ENCODE measurements at regions of chr15 and their contacts with region 1.

Region 1: DNA sequence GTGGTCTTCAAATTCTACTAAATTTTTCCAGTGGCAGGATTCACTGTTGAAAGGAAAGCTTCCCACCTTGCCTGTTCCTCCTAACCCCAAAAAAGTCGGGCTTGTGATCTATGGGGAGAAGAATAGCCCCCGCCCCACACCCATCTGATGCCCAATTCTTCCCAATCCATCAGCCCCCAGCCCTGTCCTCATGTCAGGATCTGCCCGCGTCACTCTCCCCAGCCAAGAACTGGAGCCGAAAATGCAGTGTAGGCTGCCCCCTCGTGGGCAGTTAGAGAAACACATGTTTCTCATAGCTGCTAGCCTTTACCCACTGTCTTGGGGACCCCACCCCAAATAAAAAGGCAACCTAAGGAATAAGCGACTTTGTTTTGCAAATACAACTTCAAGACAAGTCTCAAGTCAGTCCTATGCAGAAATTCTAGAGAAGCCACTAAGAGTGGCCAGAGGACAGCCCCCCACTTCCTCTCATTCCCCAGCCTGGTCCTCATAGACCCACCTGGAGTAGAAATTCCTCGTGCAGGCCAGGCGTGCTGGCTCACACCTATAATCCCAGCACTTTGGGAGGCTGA is 13.0 kb upstream of the CSK start:
- DNase-seq: peak; percentile 84
- H3K4me3 ChIP-seq: no peak overlapping the region; a peak in 1 of 4 replicates
- H3K27ac ChIP-seq: no peak overlapping the region
- H3K4me1 ChIP-seq: peaks cover 0 to 5% of the 10 kb centered on the region in 2 experiments; a peak in 1 of 4 replicates
- H3K27me3 ChIP-seq: peaks cover 8% of the 10 kb centered on the region; the same call in 1 of the 2 replicates
- CTCF ChIP-seq: peak; percentile 87
- EP300 ChIP-seq: no peak
- RAD21 ChIP-seq: peak; percentile 88

Region 2: GRCh38 chr15:74365611-74366440 is 403.0 kb before region 1 on chr15:
- CTCF ChIA-PET with region 1: interaction called, 11 read pairs
- POLR2A ChIA-PET with region 1: no interaction called
- DNase-seq: no peak
- H3K4me3 ChIP-seq: no peak overlapping the region
- H3K27ac ChIP-seq: no peak overlapping the region
- H3K4me1 ChIP-seq: no peaks in the 10 kb centered on the region
- H3K27me3 ChIP-seq: peaks cover 7% of the 10 kb centered on the region; the same call in 1 of the 2 replicates
- CTCF ChIP-seq: no peak
- EP300 ChIP-seq: no peak
- RAD21 ChIP-seq: no peak

Region 3: DNA sequence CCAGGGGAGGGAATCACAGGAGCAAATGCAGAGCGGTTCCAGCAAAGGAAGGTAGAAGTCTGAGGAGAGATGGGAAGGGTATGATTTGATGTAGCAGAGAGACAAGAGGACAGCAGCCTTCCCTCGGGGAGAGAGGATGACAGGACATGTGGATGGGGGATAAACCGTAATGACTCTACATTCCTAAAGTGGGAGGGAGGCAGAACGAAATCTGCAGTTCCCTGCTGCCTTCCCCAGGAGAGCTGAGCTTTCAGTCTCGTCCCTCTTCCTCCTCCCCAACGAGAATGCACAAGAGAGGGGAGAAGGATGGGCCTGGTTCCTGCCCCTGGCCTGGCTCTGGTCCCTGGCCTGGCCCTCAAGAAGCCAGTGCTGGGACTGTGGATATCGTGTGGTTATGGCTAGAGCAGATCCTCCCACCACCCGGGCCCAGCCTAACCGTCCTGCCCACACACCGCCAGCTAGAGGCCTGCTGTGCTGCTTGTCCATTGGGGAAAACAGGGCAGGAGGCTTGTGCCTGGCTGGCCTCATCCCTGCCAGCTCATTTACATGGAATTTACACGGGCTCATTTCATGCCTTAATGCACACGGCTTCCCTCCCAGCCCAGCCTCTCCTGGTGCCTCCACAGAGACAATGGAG is 361.7 kb before region 1 on chr15:
- CTCF ChIA-PET with region 1: no interaction called
- POLR2A ChIA-PET with region 1: no interaction called
- DNase-seq: no peak
- H3K4me3 ChIP-seq: no peak overlapping the region
- H3K27ac ChIP-seq: peak overlapping the region in 1 of 2 experiments; percentile 51; a peak in 2 of 4 replicates
- H3K4me1 ChIP-seq: peaks cover 0 to 12% of the 10 kb centered on the region in 2 experiments; a peak in 2 of 4 replicates
- H3K27me3 ChIP-seq: no peaks in the 10 kb centered on the region
- CTCF ChIP-seq: no peak
- EP300 ChIP-seq: no peak
- RAD21 ChIP-seq: no peak

Region 4: DNA sequence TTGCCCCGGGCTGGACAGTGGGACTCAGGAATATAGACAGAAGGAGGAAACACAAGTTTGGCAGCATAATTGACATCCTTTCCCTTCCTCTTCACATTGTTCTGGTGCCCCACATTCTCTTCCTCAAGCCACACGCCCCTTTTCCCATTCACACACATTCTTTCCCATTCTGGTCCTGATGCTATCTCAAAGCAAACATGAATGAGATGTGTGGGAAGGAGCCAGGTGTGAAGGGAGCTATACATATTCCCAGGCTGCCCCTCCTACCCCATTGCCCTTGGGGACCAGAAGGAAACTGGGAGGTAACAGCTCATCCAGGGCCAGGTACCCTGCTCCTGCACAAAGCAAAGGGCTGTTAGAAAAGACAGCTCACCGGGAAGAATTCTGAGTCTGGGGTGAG is 176.6 kb before region 1 on chr15:
- CTCF ChIA-PET with region 1: no interaction called
- POLR2A ChIA-PET with region 1: no interaction called
- DNase-seq: no peak
- H3K4me3 ChIP-seq: no peak overlapping the region
- H3K27ac ChIP-seq: no peak overlapping the region
- H3K4me1 ChIP-seq: peaks cover 4 to 10% of the 10 kb centered on the region in 2 experiments; a peak in 3 of 4 replicates
- H3K27me3 ChIP-seq: no peaks in the 10 kb centered on the region
- CTCF ChIP-seq: no peak
- EP300 ChIP-seq: no peak
- RAD21 ChIP-seq: no peak

Region 5: GRCh38 chr15:74682954-74683353 is 85.9 kb before region 1 on chr15:
- CTCF ChIA-PET with region 1: interaction called, 12 read pairs
- POLR2A ChIA-PET with region 1: no interaction called
- DNase-seq: no peak
- H3K4me3 ChIP-seq: no peak overlapping the region
- H3K27ac ChIP-seq: no peak overlapping the region
- H3K4me1 ChIP-seq: no peaks in the 10 kb centered on the region
- H3K27me3 ChIP-seq: no peaks in the 10 kb centered on the region
- CTCF ChIP-seq: no peak
- EP300 ChIP-seq: no peak
- RAD21 ChIP-seq: no peak

Region 6: GRCh38 chr15:74742422-74742821 is 26.4 kb before region 1 on chr15:
- CTCF ChIA-PET with region 1: interaction called, 36 read pairs
- POLR2A ChIA-PET with region 1: no interaction called
- DNase-seq: no peak
- H3K4me3 ChIP-seq: no peak overlapping the region
- H3K27ac ChIP-seq: no peak overlapping the region
- H3K4me1 ChIP-seq: no peaks in the 10 kb centered on the region
- H3K27me3 ChIP-seq: peaks cover 10% of the 10 kb centered on the region; the same call in 1 of the 2 replicates
- CTCF ChIP-seq: no peak
- EP300 ChIP-seq: no peak
- RAD21 ChIP-seq: no peak

Region 7: GRCh38 chr15:74793135-74794028 is 24.5 kb after region 1 on chr15:
- CTCF ChIA-PET with region 1: interaction called, 50 read pairs
- POLR2A ChIA-PET with region 1: no interaction called
- DNase-seq: no peak
- H3K4me3 ChIP-seq: no peak overlapping the region
- H3K27ac ChIP-seq: no peak overlapping the region; a peak in 1 of 4 replicates
- H3K4me1 ChIP-seq: peaks cover 13 to 43% of the 10 kb centered on the region in 2 experiments
- H3K27me3 ChIP-seq: no peaks in the 10 kb centered on the region
- CTCF ChIP-seq: no peak; the same call in 1 of the 2 replicates
- EP300 ChIP-seq: no peak
- RAD21 ChIP-seq: no peak

Region 8: DNA sequence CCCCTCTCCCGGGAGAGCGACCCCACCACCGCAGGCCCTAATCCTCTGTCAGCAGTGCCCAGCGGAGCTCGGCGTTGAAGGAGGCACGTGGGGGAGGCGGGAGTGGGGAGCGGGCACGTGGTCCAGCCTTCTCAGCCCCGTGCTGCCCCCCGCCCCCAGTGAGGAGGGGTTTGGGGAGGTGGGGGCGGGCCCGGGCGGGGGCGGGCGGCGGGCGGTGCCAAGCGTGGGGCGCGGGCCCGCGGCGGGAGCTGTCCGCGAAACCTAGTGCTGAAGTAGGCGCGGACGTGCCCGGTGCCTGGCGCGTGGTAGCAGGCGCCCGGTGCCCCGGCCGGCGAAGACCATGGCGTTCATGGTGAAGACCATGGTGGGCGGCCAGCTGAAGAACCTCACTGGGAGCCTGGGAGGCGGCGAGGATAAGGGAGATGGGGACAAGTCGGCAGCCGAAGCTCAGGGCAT is 57.5 kb after region 1 on chr15 and contains the start of gene CPLX3:
- CTCF ChIA-PET with region 1: interaction called, 82 read pairs
- POLR2A ChIA-PET with region 1: no interaction called
- DNase-seq: peak; percentile 62
- H3K4me3 ChIP-seq: no peak within 1 kb of the TSS
- H3K27ac ChIP-seq: no peak within 1 kb of the TSS
- H3K4me1 ChIP-seq: peaks cover 0 to 20% of the 10 kb centered on the region in 2 experiments; a peak in 1 of 4 replicates
- H3K27me3 ChIP-seq: peaks cover 24% of the 10 kb centered on the region; the same call in 1 of the 2 replicates
- CTCF ChIP-seq: no peak
- EP300 ChIP-seq: no peak
- RAD21 ChIP-seq: no peak
- polyA plus RNA-seq, gene CPLX3: not detected in 2 replicates

Region 9: GRCh38 chr15:74924525-74924924 is 155.7 kb after region 1 on chr15:
- CTCF ChIA-PET with region 1: no interaction called
- POLR2A ChIA-PET with region 1: no interaction called
- DNase-seq: no peak
- H3K4me3 ChIP-seq: no peak overlapping the region
- H3K27ac ChIP-seq: no peak overlapping the region
- H3K4me1 ChIP-seq: no peaks in the 10 kb centered on the region
- H3K27me3 ChIP-seq: no peaks in the 10 kb centered on the region
- CTCF ChIP-seq: no peak
- EP300 ChIP-seq: no peak
- RAD21 ChIP-seq: no peak

Region 10: GRCh38 chr15:74950078-74951000 is 181.5 kb after region 1 on chr15:
- CTCF ChIA-PET with region 1: interaction called, 165 read pairs
- POLR2A ChIA-PET with region 1: interaction called, 5 read pairs
- DNase-seq: peak; percentile 67
- H3K4me3 ChIP-seq: no peak overlapping the region; a peak in 1 of 4 replicates
- H3K27ac ChIP-seq: no peak overlapping the region; a peak in 1 of 4 replicates
- H3K4me1 ChIP-seq: peaks cover 0 to 18% of the 10 kb centered on the region in 2 experiments; a peak in 1 of 4 replicates
- H3K27me3 ChIP-seq: no peaks in the 10 kb centered on the region
- CTCF ChIP-seq: peak; percentile 98
- EP300 ChIP-seq: 0 out of 4 replicates have a peak, but pooled peaks of 1 of the 2 experiments have one; percentile 10
- RAD21 ChIP-seq: peak; percentile 96

Measured in SK-N-SH (cell line).